Activated T-helper 2 cell treated with anti-CD3 and anti-CD28 coated beads, Interferon-gamma antibody, Interleukin-2, Interleukin-4, amounts not matched to agents 10 μg/mL and 5 μg/mL and 100 μg/mL, durations not matched to agents 14 hours and 24 hours and 36 hours (primary cell): ENCODE measurements at regions of chr7 and their contacts with region 1.

Region 1: GRCh38 chr7:30564243-30564892 is 30.3 kb upstream of the GARS1 start:
- DNase-seq: peak; percentile 60
- H3K4me3 Mint-ChIP-seq: no peak overlapping the region
- H3K27ac Mint-ChIP-seq: no peak overlapping the region
- H3K4me1 Mint-ChIP-seq: no peaks in the 10 kb centered on the region
- H3K27me3 Mint-ChIP-seq: no peaks in the 10 kb centered on the region

Region 2: GRCh38 chr7:30276203-30276900 is 288.0 kb before region 1 on chr7:
- intact Hi-C with region 1: loop called (anchors 1 kb)
- DNase-seq: peak; percentile 32
- H3K4me3 Mint-ChIP-seq: no peak overlapping the region
- H3K27ac Mint-ChIP-seq: no peak overlapping the region
- H3K4me1 Mint-ChIP-seq: peaks cover 6% of the 10 kb centered on the region
- H3K27me3 Mint-ChIP-seq: no peaks in the 10 kb centered on the region

Region 3: GRCh38 chr7:30510124-30511075 is 54.0 kb before region 1 on chr7:
- intact Hi-C with region 1: loop called (anchors 1 kb)
- DNase-seq: no peak
- H3K4me3 Mint-ChIP-seq: no peak overlapping the region
- H3K27ac Mint-ChIP-seq: no peak overlapping the region
- H3K4me1 Mint-ChIP-seq: peaks cover 25% of the 10 kb centered on the region
- H3K27me3 Mint-ChIP-seq: no peaks in the 10 kb centered on the region

Region 4: DNA sequence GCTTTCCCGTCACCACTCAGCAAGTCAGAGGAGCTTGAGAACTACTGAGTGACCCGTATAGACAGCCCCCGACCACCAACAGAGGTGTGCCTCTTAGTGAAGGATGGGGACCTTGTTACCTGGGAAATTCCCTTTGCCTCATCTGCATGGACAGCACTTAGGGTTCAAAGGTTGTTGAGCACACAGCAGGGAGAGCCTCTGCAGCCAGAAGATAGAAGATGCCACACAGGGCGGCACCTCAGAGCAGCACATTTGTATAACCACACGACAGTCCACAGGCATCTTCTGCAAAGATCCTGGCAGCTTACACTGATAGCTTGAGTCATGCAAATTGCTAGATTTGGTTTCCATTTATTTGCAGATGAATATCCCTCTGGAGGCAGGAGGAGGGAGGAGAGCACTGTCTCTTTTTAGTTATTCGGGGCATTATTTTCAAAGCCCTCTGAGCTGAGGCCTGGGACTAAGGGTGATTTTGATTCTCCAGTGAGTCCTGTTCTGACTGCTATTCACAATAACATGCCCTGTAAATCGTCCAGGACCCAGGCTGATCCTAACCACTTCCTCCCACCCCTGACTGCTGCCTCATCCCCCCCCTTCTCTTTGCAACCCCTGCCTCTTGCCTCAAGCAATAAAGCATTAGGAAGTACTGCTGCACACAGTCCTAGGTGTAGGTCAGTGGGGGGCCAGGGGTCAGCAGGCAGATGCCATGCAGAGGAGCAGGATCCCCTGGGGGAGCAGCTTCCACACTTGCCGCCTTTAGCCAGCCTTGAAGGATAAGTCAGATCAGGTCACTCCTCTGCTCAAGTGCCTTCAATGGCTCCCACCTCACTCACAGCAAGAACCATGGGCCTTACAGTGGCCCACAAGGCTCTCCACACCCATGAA is 162.9 kb after region 1 on chr7:
- intact Hi-C with region 1: no loop called
- DNase-seq: peak; percentile 55
- H3K4me3 Mint-ChIP-seq: peak overlapping the region; percentile 75
- H3K27ac Mint-ChIP-seq: peak overlapping the region; percentile 84
- H3K4me1 Mint-ChIP-seq: peaks cover 34% of the 10 kb centered on the region
- H3K27me3 Mint-ChIP-seq: peaks cover 3% of the 10 kb centered on the region

Region 5: DNA sequence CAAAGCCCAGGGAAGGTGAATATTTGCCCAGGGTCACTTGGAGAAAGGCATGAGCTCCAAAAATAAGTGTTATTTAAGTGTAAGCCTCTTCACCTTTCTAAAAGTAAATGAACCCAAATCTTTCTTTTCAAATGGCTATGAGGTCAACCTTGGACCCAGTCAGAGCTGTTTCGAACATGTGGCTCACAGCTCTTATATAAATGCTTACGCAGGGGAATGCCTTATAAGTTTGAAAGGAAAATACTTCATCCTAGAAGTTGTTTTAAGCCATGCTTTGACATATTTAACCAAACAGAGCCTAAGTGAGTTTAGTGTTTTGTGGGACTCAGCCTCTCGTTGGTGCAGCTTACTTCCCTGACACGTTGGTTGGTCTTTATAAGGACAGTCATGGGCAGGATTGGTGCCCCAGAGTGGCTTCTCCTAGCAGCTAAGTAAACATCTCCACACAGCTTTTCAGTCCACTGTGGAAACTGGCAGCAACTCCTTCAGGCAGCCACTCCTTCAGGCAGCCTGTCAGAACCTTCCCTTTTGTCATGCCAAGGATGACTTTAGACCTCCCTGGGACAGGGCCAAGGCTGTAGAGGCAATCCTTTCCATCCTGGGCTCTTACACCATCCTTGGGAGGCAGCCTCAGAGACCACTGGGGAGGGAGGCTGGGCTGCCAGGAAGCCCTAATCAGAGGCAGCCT is 250.5 kb after region 1 on chr7:
- intact Hi-C with region 1: no loop called
- DNase-seq: no peak
- H3K4me3 Mint-ChIP-seq: no peak overlapping the region
- H3K27ac Mint-ChIP-seq: no peak overlapping the region
- H3K4me1 Mint-ChIP-seq: no peaks in the 10 kb centered on the region
- H3K27me3 Mint-ChIP-seq: peaks cover 3% of the 10 kb centered on the region